Right ventricle myocardium superior (tissue), 1 donor: ENCODE measurements at regions of chr4 and their contacts with region 1.

Region 1: DNA sequence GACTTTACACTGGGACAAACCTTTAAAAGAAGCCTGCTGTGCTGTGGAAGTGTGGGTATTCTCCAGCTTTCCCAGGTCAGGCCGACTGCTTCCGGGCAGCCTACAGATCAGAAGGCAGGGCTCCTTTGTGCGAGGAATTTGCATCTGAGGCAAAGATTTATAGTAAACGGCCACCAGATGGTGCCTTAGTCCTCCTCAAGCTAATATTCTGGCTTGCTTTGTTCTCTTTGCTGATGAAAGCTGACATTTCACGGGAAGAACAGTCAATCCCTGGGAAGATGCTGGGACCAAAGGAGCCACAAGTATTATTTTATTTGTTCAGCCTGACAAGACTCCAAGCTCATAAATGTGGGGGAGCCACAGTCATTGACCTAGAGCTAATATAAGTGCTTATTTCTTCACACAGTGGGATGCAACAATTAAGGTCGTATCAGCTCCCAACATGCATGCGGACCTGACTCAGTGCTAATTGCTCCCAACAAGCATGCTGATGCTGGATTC is 120.7 kb upstream of the TRIM2 start:
- DNase-seq: no peak
- ATAC-seq: peak; percentile 90

Region 2: DNA sequence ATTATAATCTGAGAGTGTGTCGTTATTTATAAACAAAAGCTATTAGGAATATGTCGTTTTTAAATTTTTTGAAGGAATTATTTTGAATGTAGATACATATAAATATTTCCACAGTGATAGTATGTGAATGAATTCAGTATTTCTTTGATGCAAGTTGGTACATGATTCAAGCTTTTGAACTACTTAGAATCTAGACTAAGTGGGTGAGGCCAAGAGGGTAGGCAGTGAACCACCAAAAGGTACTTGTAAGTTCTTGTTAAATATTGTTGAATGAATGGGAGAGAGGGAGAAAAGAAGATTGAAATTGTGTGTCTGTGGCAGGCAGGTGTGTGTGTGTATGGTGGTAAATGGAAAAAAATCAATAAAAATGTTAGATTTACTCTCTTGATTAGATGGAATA is 234.1 kb before region 1 on chr4:
- intact Hi-C with region 1: loop called (anchors 5 kb)
- DNase-seq: no peak
- ATAC-seq: no peak